PC-3 (cell line): ENCODE measurements at regions of chr17 and their contacts with region 1.

Region 1: DNA sequence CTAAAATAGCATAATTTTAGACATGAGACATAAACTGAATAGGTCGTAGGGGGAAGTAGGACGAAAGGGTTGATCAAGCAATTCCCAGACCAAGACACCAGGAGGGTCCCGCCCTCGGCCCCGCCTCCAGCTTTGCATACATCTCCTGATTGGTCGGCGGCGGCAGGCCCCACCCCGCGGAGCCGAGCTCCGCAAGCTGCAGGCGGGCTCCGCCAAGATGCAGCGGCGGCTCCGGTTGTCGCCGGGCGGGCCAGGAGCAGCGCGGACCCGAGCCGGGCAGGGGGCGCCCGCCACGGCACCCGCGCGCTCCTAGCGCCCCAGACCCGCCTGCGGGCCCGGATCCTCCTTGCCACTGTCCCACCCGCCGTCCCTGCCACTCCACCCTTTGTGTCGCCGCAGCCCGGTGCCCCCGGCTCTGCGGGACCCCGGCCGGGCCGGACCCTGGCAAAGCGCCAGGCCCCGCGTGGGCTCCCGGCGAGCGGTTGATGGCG is at the start of gene CDR2L:
- DNase-seq: peak; percentile 97
- ATAC-seq: peak; percentile 84
- H3K4me3 ChIP-seq: peak within 1 kb of the TSS; percentile 84
- H3K27ac ChIP-seq: peak within 1 kb of the TSS; percentile 17
- H3K4me1 ChIP-seq: peaks cover 22% of the 10 kb centered on the region
- H3K27me3 ChIP-seq: no peaks in the 10 kb centered on the region
- CTCF ChIP-seq: no peak
- total RNA-seq, gene CDR2L: 35.8 and 50.9 TPM in 2 replicates

Region 2: GRCh38 chr17:74972107-74972972 is 15.1 kb before region 1 on chr17 and contains the start of gene HID1:
- CTCF ChIA-PET with region 1: interaction called, 6 read pairs
- POLR2A ChIA-PET with region 1: interaction called, 12 read pairs
- intact Hi-C with region 1: no loop called
- DNase-seq: peak; percentile 88
- ATAC-seq: peak; percentile 85
- H3K4me3 ChIP-seq: peak within 1 kb of the TSS; percentile 90
- H3K27ac ChIP-seq: peak within 1 kb of the TSS; percentile 15
- H3K4me1 ChIP-seq: peaks cover 36% of the 10 kb centered on the region
- H3K27me3 ChIP-seq: no peaks in the 10 kb centered on the region
- CTCF ChIP-seq: no peak
- total RNA-seq, gene HID1: 40.6 and 51.0 TPM in 2 replicates

Region 3: GRCh38 chr17:75006653-75007052 is 19.2 kb after region 1 on chr17:
- CTCF ChIA-PET with region 1: interaction called, 5 read pairs
- POLR2A ChIA-PET with region 1: interaction called, 8 read pairs
- intact Hi-C with region 1: loop called (anchors 1 kb)
- DNase-seq: peak; percentile 26
- ATAC-seq: no peak
- H3K4me3 ChIP-seq: no peak overlapping the region
- H3K27ac ChIP-seq: no peak overlapping the region
- H3K4me1 ChIP-seq: peaks cover 15% of the 10 kb centered on the region
- H3K27me3 ChIP-seq: no peaks in the 10 kb centered on the region
- CTCF ChIP-seq: 0 out of 2 replicates have a peak, but pooled peaks have one; percentile 24